ENCODE measurements at regions of chr7 and their contacts with region 1.

Region 1: GRCh38 chr7:37448636-37449361 is at the start of gene ELMO1:
- DNase-seq: peak; percentile 87
- H3K4me3 Mint-ChIP-seq: peak within 1 kb of the TSS; percentile 87
- H3K27ac Mint-ChIP-seq: peak within 1 kb of the TSS; percentile 96
- H3K4me1 Mint-ChIP-seq: peaks cover 44% of the 10 kb centered on the region
- H3K27me3 Mint-ChIP-seq: peaks cover 1% of the 10 kb centered on the region
- total RNA-seq, gene ELMO1: 88.7 to 93.3 TPM

Region 2: GRCh38 chr7:35694781-35695472 is 1753.9 kb before region 1 on chr7 and contains the start of gene HERPUD2:
- CTCF ChIA-PET with region 1: no interaction called
- POLR2A ChIA-PET with region 1: no interaction called
- intact Hi-C with region 1: loop called (anchors 10 kb)
- DNase-seq: peak; percentile 95
- H3K4me3 Mint-ChIP-seq: peak within 1 kb of the TSS; percentile 93
- H3K27ac Mint-ChIP-seq: peak within 1 kb of the TSS; percentile 98
- H3K4me1 Mint-ChIP-seq: peaks cover 45% of the 10 kb centered on the region
- H3K27me3 Mint-ChIP-seq: no peaks in the 10 kb centered on the region
- total RNA-seq, gene HERPUD2: 26.2 to 29.6 TPM

Region 3: GRCh38 chr7:37216156-37216852 is 232.5 kb before region 1 on chr7:
- CTCF ChIA-PET with region 1: no interaction called
- POLR2A ChIA-PET with region 1: no interaction called
- intact Hi-C with region 1: loop called (anchors 5 kb)
- DNase-seq: no peak
- H3K4me3 Mint-ChIP-seq: no peak overlapping the region
- H3K27ac Mint-ChIP-seq: peak overlapping the region; percentile 31
- H3K4me1 Mint-ChIP-seq: peaks cover 12% of the 10 kb centered on the region
- H3K27me3 Mint-ChIP-seq: no peaks in the 10 kb centered on the region

Region 4: DNA sequence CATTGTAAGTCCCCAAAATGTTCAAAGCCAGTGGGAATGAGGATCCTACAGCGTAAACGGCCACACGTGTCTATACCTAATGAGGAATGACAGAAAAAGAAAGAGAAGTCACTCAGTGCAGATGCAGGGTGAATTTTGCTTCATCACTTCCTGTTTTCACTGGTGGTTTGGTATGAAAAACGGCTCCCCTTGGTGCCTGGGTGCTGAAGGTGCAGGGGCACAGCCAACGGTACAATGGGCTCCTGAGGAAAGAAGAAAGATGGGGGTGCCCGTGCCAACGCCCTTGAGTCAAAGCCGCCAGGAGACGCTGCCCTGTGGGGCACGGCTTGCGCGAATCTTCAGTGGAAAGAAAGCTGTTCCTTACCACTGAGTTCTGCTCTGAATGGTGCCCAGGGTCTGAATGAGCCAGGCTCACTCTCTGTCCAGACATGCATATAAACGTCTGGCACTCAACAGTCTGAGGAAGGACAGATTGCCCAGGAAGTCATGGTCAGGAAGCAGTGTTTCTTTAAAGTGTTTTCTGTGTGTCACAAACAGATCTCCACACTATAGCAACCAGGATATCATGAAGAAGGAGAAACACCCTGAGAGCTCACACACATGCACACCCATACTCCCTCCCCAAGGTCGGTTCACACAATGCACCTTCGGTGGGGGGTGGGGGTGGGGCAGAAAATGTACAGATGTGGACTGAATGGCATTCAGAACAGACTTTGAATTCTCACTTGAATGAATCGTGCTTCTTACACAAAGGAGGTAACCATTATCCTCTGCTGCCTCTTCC is 105.9 kb before region 1 on chr7:
- CTCF ChIA-PET with region 1: interaction called, 19 read pairs
- POLR2A ChIA-PET with region 1: interaction called, 14 read pairs
- intact Hi-C with region 1: loop called (anchors 1 kb)
- DNase-seq: peak; percentile 85
- H3K4me3 Mint-ChIP-seq: peak overlapping the region; percentile 96
- H3K27ac Mint-ChIP-seq: peak overlapping the region; percentile 94
- H3K4me1 Mint-ChIP-seq: peaks cover 79% of the 10 kb centered on the region
- H3K27me3 Mint-ChIP-seq: no peaks in the 10 kb centered on the region

Region 5: DNA sequence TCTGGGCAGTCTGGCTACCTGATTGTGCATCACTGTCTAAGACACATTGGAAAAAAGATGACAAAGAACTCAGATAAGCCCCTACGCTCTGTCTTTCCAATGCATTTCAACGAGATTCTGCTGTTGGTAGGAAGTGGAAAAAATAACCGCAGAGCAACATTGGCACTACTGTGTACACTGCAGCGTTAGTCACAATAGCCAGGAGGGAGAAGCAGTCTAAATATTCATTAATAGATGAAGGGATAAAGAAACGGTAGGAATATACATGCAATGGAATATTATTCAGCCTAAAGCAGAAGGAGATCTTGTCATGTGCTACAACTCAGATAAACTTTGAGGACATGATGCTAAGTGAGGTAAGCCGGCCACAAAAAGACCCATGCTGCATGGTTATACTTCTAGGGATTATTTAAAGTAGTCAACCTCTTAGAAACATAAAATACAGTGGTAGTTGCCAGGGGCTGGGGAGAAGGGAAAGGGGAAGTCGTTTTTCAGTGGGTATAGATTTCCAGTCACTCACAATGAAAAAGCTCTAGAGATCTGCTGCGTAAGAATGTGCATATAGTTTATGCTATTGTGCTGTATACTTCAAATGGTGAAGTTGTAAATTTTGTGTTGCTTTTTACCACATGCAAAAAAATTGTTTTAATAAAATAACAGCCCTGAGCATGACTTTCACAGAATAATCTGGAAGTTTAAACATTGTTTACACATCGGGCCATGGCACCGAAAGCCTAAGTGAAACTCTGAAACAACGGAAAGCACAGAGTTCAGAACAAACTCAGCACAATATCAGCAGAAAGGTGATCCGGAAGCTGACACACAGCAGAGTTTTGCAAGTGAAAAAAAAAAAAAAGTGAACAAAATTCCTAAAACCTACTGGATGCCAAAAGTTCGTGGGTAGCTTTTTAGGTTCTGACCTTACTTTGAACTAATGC is 40.2 kb before region 1 on chr7:
- CTCF ChIA-PET with region 1: interaction called, 12 read pairs
- POLR2A ChIA-PET with region 1: interaction called, 7 read pairs
- intact Hi-C with region 1: loop called (anchors 1 kb)
- DNase-seq: peak; percentile 34
- H3K4me3 Mint-ChIP-seq: peak overlapping the region; percentile 70
- H3K27ac Mint-ChIP-seq: peak overlapping the region; percentile 96
- H3K4me1 Mint-ChIP-seq: peaks cover 86% of the 10 kb centered on the region
- H3K27me3 Mint-ChIP-seq: no peaks in the 10 kb centered on the region

Region 6: DNA sequence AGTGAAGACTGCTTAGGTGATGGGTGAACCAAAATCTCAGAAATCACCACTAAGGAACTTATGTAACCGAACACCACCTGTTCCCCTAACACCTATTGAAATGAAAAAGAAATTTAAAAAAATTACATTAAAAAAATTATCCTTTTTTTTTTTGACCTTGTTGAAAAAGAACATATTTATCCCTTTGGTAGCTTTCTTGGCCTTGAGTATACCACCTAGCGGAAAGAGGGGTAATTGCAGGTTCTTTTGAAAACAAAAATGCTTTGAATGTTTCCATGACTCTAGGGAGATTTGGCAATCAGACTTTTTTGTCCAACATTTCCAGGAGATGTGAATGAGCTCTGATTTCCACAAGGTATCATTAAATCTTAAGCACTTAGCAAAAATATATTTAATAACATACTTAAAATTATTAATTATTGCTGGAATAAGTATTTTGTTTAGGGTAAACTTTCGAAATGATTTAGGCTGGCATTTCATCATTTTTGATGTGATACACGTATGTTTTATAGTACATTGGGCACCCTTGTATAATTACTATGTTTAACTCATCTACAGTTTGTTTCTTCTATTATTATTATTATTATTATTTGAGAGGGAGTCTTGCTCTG is 46.9 kb after region 1 on chr7:
- CTCF ChIA-PET with region 1: interaction called, 25 read pairs
- POLR2A ChIA-PET with region 1: interaction called, 5 read pairs
- intact Hi-C with region 1: loop called (anchors 5 kb)
- DNase-seq: no peak
- H3K4me3 Mint-ChIP-seq: no peak overlapping the region
- H3K27ac Mint-ChIP-seq: no peak overlapping the region
- H3K4me1 Mint-ChIP-seq: peaks cover 8% of the 10 kb centered on the region
- H3K27me3 Mint-ChIP-seq: no peaks in the 10 kb centered on the region

Region 7: DNA sequence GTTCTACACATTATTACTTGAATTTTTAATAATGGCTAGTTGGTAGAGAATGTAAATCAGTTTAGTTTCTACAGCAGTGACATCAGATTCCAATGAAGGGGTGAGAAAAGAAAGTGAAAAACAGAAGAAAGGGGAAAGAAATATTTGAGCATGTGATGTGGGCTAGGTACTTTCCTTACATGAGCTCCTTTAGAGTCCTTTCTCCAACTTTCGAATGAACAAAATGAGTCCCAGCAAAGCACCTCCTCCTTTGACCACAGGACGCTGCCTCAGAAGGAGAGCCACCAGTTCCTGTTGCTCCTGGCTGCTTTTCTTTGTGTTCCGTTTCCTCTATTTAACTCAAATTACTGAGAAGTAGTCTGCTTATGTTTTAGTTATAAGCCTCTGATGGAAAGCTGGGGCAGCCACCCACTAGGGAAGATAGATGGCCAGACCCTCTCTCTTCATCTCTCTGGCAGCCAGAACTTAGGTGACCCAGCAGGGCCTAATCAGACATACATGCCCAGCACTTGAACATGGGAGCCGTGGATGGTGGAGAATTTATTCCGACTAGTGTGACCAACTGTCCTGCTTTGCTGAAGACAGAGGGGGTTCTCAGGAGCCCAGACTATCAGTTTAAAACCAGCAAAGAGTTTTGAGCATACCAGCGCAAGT is 317.2 kb after region 1 on chr7:
- CTCF ChIA-PET with region 1: no interaction called
- POLR2A ChIA-PET with region 1: no interaction called
- intact Hi-C with region 1: no loop called
- DNase-seq: no peak
- H3K4me3 Mint-ChIP-seq: no peak overlapping the region
- H3K27ac Mint-ChIP-seq: no peak overlapping the region
- H3K4me1 Mint-ChIP-seq: no peaks in the 10 kb centered on the region
- H3K27me3 Mint-ChIP-seq: peaks cover 2% of the 10 kb centered on the region

Measured in activated CD4-positive, alpha-beta memory T cell treated with anti-CD3 and anti-CD28 coated beads for 36 hours (primary cell).